Colonic mucosa (tissue), 4 donors: ENCODE measurements at regions of chr4 and their contacts with region 1.

Region 1: GRCh38 chr4:127604949-127605709 is 27.6 kb upstream of the INTU start:
- DNase-seq: no peak
- H3K4me3 ChIP-seq: no peak overlapping the region
- H3K27ac ChIP-seq: no peak overlapping the region
- H3K4me1 ChIP-seq: no peaks in the 10 kb centered on the region
- H3K27me3 ChIP-seq: no peaks in the 10 kb centered on the region
- CTCF ChIP-seq: peak; percentile 36

Region 2: GRCh38 chr4:127732613-127733328 is 127.6 kb after region 1 on chr4:
- intact Hi-C with region 1: loop called (anchors 2 kb)
- DNase-seq: no peak
- H3K4me3 ChIP-seq: no peak overlapping the region
- H3K27ac ChIP-seq: no peak overlapping the region
- H3K4me1 ChIP-seq: no peaks in the 10 kb centered on the region
- H3K27me3 ChIP-seq: no peaks in the 10 kb centered on the region
- CTCF ChIP-seq: peak; percentile 36

Region 3: GRCh38 chr4:127849505-127850234 is 244.5 kb after region 1 on chr4:
- intact Hi-C with region 1: no loop called
- DNase-seq: no peak
- H3K4me3 ChIP-seq: no peak overlapping the region
- H3K27ac ChIP-seq: no peak overlapping the region
- H3K4me1 ChIP-seq: no peaks in the 10 kb centered on the region
- H3K27me3 ChIP-seq: no peaks in the 10 kb centered on the region
- CTCF ChIP-seq: no peak